Aorta (tissue), 5 donors: ENCODE measurements at regions of chr20 and their contacts with region 1.

Region 1: DNA sequence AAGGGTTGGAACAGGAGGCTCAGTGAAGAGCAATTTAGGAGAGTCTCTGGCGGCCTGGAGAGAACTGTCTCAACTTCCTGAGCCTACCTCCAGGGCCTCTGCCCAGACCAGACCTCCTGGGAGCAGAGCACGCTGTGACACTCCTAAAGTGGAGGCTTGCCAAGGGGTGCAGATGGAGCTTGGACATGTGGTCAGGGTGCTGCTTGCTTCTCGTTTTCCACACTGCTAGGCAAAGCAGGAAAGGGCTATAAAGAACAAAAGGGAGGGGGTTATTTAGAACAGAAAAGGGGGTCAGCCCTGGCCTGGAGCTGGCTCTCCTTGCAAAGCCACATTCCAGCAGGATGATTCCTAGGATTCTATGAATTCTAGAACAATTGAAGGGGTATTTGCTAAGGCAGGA is 145.7 kb upstream of the GGTLC1 start:
- DNase-seq: no peak
- ATAC-seq: no peak
- H3K4me3 ChIP-seq: no peak overlapping the region
- H3K27ac ChIP-seq: no peak overlapping the region
- H3K4me1 ChIP-seq: no peaks in the 10 kb centered on the region
- H3K27me3 ChIP-seq: no peaks in the 10 kb centered on the region

Region 2: GRCh38 chr20:24194137-24194536 is 59.9 kb after region 1 on chr20:
- intact Hi-C with region 1: loop called in 1 of 2 experiments (anchors 10 kb)
- DNase-seq: no peak
- ATAC-seq: no peak
- H3K4me3 ChIP-seq: no peak overlapping the region
- H3K27ac ChIP-seq: no peak overlapping the region
- H3K4me1 ChIP-seq: no peaks in the 10 kb centered on the region
- H3K27me3 ChIP-seq: no peaks in the 10 kb centered on the region

Region 3: DNA sequence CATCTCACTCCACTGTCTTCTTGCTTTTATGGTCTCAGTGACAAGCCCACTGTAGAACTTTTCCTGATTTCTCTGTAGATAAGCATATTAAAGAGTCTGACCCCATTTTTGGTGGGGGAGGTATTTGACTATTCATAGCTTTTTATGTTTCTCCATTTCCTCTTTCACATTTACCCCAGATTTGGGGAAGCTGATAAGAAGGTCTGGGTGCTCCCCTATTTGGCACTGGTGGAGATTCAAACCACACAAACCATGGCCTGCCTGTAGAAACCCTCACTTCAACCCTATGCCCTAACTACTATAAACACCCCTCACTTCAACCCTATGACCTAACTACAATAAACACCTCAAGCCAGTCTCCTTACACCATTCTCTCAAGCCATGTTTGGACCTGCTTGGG is 139.0 kb after region 1 on chr20:
- intact Hi-C with region 1: no loop called
- DNase-seq: no peak
- ATAC-seq: no peak
- H3K4me3 ChIP-seq: no peak overlapping the region
- H3K27ac ChIP-seq: no peak overlapping the region
- H3K4me1 ChIP-seq: no peaks in the 10 kb centered on the region
- H3K27me3 ChIP-seq: no peaks in the 10 kb centered on the region